Naive thymus-derived CD4-positive, alpha-beta T cell (primary cell): ENCODE measurements at regions of chr11 and their contacts with region 1.

Region 1: DNA sequence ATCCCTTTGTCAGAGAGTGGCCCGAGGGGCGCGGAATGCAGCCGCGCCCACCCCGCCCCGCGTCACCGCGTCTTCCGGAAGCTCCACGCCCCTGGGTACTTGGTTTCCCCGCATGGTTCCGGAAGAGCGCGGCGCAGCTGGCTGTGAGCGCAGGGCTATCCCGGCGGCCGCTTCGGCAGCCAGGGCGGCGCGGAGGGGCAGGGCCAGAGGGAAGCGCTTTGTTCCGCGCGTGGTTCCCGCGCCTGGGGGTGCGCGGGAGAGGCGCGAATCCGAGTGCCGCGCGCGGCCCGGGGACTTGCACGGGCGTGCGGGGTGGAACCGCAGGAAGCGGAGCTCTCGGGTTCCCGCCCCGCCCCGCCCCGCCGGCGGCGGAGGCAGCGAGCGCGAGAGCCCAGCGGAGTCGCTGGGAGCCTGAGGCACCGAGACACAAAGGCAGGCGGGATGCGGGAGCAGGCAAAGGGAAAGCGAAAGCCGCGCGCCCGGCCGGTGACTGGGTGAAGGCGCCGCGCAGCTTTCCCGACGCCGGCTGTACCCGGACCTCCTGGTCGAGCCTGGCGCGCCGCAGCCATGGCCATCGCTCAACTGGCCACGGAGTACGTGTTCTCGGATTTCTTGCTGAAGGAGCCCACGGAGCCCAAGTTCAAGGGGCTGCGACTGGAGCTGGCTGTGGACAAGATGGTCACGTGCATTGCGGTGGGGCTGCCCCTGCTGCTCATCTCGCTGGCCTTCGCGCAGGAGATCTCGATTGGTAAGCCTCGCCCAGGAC is at the start of gene PANX1:
- DNase-seq: peak; percentile 48 to 80 (median 74)
- ATAC-seq: peak; percentile 87
- H3K4me3 ChIP-seq: peak within 1 kb of the TSS; percentile 97
- H3K4me3 Mint-ChIP-seq: peak within 1 kb of the TSS in 2 of 10 donors; percentile 85 to 92
- H3K27ac ChIP-seq: peak within 1 kb of the TSS; percentile 73
- H3K27ac Mint-ChIP-seq: peak within 1 kb of the TSS; percentile 77 to 96 (median 89)
- H3K4me1 ChIP-seq: peaks cover 21 to 29% of the 10 kb centered on the region in 2 donors
- H3K4me1 Mint-ChIP-seq: peaks cover 18 to 32% (median 27%) of the 10 kb centered on the region in 7 donors
- H3K27me3 ChIP-seq: no peaks in the 10 kb centered on the region
- H3K27me3 Mint-ChIP-seq: no peaks in the 10 kb centered on the region
- total RNA-seq, gene PANX1: 5.6 to 14.8 (median 6.1) TPM

Region 2: DNA sequence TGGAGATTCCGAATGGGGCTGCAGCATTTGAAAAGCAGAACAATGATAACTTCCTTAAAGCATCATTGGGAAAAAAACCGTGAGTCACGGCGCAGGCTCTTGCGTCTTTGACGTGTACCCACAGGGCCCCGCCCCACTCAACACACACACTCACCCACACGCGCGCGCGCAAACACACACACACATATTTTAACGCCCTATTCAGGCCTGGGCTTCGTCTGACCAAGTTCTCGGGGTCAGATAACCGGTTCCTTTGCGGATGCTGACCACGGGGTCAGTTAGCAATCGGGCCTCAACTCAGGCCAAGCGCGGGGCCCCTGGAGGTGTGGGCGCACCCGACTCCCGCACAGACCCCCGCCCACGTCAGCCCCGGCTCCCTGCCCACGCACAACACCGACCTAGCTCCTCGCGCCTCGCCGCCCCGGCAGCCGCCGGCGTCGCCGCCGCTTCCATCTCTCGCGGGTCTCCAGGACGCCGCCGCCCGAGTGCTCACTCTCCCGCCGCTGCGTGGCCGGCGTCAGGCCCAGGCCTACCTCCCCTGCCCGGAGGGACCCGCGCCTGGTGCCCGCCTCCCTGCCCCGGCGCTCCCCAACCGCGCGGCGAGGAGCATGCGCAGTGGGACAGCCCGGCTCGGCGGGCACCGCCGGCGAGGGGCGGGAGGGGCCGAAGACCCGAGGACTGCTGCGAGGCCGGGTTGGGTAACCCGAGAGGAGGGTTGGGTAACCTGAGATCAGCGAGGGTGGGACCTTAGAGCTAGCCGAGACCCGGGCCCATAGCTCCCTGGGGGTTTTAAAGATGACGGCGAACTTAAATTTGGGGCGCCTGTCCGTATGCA is 931.3 kb before region 1 on chr11 and contains the start of gene SLC36A4:
- CTCF ChIA-PET with region 1: no interaction called
- POLR2A ChIA-PET with region 1: no interaction called
- intact Hi-C with region 1: loop called (anchors 1 kb)
- DNase-seq: peak; percentile 78 to 90 (median 88)
- ATAC-seq: peak; percentile 94
- H3K4me3 ChIP-seq: peak within 1 kb of the TSS; percentile 54
- H3K4me3 Mint-ChIP-seq: peak within 1 kb of the TSS; percentile 88 to 98 (median 95)
- H3K27ac ChIP-seq: peak within 1 kb of the TSS; percentile 96
- H3K27ac Mint-ChIP-seq: peak within 1 kb of the TSS; percentile 87 to 99 (median 97)
- H3K4me1 ChIP-seq: peaks cover 0 to 4% of the 10 kb centered on the region in 2 donors
- H3K4me1 Mint-ChIP-seq: peaks cover 15 to 40% (median 30%) of the 10 kb centered on the region in 7 donors
- H3K27me3 ChIP-seq: no peaks in the 10 kb centered on the region
- H3K27me3 Mint-ChIP-seq: peaks cover 0 to 24% (median 5%) of the 10 kb centered on the region in 5 donors
- total RNA-seq, gene SLC36A4: 12.0 to 22.0 (median 20.0) TPM

Region 3: DNA sequence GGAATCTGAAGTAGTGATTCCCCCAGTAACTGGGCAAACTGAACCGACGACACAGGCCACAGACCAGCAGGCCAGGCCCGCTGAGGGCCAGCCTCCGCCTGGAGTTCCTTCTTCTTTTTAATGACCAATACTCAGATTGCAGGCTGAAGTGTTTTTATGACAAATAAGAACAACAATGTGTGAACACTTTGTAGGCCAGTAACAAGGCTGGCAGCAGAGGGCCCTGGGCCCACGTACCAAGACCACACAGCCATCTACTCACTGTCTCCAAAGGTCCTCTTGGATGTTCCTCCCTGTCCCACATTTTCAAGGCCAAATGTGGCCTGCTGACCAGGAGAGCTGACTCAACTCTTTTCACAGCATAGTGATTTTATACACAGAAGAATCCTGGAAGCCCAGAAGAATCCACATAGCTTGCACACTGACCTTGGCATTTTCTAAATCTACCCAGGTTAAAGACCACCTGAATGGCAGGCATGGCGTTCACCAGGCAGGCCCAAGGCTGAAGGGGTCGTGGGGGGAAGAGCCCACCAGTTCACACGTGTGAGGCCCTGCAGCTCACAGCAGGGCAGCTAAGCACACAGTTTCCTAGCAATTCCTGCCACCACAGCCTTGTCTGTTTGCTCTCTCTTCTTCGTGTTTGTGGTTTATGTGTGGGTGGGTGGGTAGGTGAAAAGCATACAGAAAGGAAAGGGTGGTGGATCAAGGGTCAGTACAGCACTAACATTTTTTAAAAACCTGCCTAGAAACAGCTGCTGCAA is 599.0 kb before region 1 on chr11:
- CTCF ChIA-PET with region 1: no interaction called
- POLR2A ChIA-PET with region 1: no interaction called
- intact Hi-C with region 1: loop called in 1 of 2 experiments (anchors 10 kb)
- DNase-seq: no peak
- ATAC-seq: peak; percentile 52
- H3K4me3 ChIP-seq: no peak overlapping the region
- H3K4me3 Mint-ChIP-seq: peak overlapping the region in 2 of 10 donors; percentile 22 to 66
- H3K27ac ChIP-seq: no peak overlapping the region
- H3K27ac Mint-ChIP-seq: peak overlapping the region in 4 of 9 donors; percentile 38 to 77 (median 74)
- H3K4me1 ChIP-seq: no peaks in the 10 kb centered on the region
- H3K4me1 Mint-ChIP-seq: peaks cover 7 to 78% (median 26%) of the 10 kb centered on the region in 7 donors
- H3K27me3 ChIP-seq: no peaks in the 10 kb centered on the region
- H3K27me3 Mint-ChIP-seq: no peaks in the 10 kb centered on the region

Region 4: GRCh38 chr11:93662177-93662575 is 466.8 kb before region 1 on chr11:
- CTCF ChIA-PET with region 1: no interaction called
- POLR2A ChIA-PET with region 1: no interaction called
- intact Hi-C with region 1: loop called in 1 of 2 experiments (anchors 5 kb)
- DNase-seq: no peak
- ATAC-seq: no peak
- H3K4me3 ChIP-seq: peak overlapping the region; percentile 98
- H3K4me3 Mint-ChIP-seq: peak overlapping the region; percentile 76 to 96 (median 88)
- H3K27ac ChIP-seq: peak overlapping the region; percentile 88
- H3K27ac Mint-ChIP-seq: peak overlapping the region; percentile 60 to 95 (median 90)
- H3K4me1 ChIP-seq: peaks cover 8 to 11% of the 10 kb centered on the region in 2 donors
- H3K4me1 Mint-ChIP-seq: peaks cover 0 to 52% (median 37%) of the 10 kb centered on the region in 7 donors
- H3K27me3 ChIP-seq: no peaks in the 10 kb centered on the region
- H3K27me3 Mint-ChIP-seq: peaks cover 0 to 2% (median 0%) of the 10 kb centered on the region in 5 donors

Region 5: GRCh38 chr11:94028436-94028835 is 100.5 kb before region 1 on chr11:
- CTCF ChIA-PET with region 1: no interaction called
- POLR2A ChIA-PET with region 1: no interaction called
- intact Hi-C with region 1: no loop called
- DNase-seq: no peak
- ATAC-seq: no peak
- H3K4me3 ChIP-seq: no peak overlapping the region
- H3K4me3 Mint-ChIP-seq: no peak overlapping the region
- H3K27ac ChIP-seq: no peak overlapping the region
- H3K27ac Mint-ChIP-seq: no peak overlapping the region
- H3K4me1 ChIP-seq: no peaks in the 10 kb centered on the region
- H3K4me1 Mint-ChIP-seq: no peaks in the 10 kb centered on the region
- H3K27me3 ChIP-seq: no peaks in the 10 kb centered on the region
- H3K27me3 Mint-ChIP-seq: peaks cover 0 to 42% (median 16%) of the 10 kb centered on the region in 5 donors

Region 6: DNA sequence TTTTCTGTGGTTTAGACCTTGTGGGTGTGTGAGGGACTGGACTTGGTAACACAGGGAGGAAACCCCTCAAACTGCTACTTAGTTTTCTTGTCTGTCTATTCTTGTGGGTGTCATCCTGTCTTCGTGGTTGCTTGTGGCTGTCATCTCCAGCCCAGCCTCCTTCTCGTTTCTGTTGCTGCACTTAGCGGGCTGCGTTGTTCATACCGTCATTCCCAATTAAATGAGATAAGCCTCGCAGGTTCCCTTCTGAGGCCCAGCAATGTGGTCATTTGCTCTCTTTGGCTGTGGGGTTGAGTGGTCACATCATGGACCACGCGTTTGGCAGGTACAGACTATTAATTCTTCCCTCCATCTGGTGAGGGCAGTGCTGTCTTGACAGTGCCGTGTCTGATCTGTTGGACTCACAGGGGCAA is 18.5 kb after region 1 on chr11:
- CTCF ChIA-PET with region 1: no interaction called
- POLR2A ChIA-PET with region 1: no interaction called
- intact Hi-C with region 1: loop called (anchors 2 kb)
- DNase-seq: peak in 2 of 9 donors; percentile 18 to 30
- ATAC-seq: peak; percentile 37
- H3K4me3 ChIP-seq: no peak overlapping the region
- H3K4me3 Mint-ChIP-seq: peak overlapping the region; percentile 1 to 58 (median 30)
- H3K27ac ChIP-seq: no peak overlapping the region
- H3K27ac Mint-ChIP-seq: peak overlapping the region in 4 of 9 donors; percentile 7 to 75 (median 22)
- H3K4me1 ChIP-seq: peaks cover 0 to 8% of the 10 kb centered on the region in 2 donors
- H3K4me1 Mint-ChIP-seq: peaks cover 53 to 88% (median 81%) of the 10 kb centered on the region in 7 donors
- H3K27me3 ChIP-seq: no peaks in the 10 kb centered on the region
- H3K27me3 Mint-ChIP-seq: no peaks in the 10 kb centered on the region

Region 7: GRCh38 chr11:94224078-94224477 is 95.1 kb after region 1 on chr11:
- CTCF ChIA-PET with region 1: no interaction called
- POLR2A ChIA-PET with region 1: no interaction called
- intact Hi-C with region 1: no loop called
- DNase-seq: no peak
- ATAC-seq: no peak
- H3K4me3 ChIP-seq: no peak overlapping the region
- H3K4me3 Mint-ChIP-seq: no peak overlapping the region
- H3K27ac ChIP-seq: no peak overlapping the region
- H3K27ac Mint-ChIP-seq: no peak overlapping the region
- H3K4me1 ChIP-seq: no peaks in the 10 kb centered on the region
- H3K4me1 Mint-ChIP-seq: no peaks in the 10 kb centered on the region
- H3K27me3 ChIP-seq: no peaks in the 10 kb centered on the region
- H3K27me3 Mint-ChIP-seq: peaks cover 0 to 8% (median 0%) of the 10 kb centered on the region in 5 donors

Region 8: DNA sequence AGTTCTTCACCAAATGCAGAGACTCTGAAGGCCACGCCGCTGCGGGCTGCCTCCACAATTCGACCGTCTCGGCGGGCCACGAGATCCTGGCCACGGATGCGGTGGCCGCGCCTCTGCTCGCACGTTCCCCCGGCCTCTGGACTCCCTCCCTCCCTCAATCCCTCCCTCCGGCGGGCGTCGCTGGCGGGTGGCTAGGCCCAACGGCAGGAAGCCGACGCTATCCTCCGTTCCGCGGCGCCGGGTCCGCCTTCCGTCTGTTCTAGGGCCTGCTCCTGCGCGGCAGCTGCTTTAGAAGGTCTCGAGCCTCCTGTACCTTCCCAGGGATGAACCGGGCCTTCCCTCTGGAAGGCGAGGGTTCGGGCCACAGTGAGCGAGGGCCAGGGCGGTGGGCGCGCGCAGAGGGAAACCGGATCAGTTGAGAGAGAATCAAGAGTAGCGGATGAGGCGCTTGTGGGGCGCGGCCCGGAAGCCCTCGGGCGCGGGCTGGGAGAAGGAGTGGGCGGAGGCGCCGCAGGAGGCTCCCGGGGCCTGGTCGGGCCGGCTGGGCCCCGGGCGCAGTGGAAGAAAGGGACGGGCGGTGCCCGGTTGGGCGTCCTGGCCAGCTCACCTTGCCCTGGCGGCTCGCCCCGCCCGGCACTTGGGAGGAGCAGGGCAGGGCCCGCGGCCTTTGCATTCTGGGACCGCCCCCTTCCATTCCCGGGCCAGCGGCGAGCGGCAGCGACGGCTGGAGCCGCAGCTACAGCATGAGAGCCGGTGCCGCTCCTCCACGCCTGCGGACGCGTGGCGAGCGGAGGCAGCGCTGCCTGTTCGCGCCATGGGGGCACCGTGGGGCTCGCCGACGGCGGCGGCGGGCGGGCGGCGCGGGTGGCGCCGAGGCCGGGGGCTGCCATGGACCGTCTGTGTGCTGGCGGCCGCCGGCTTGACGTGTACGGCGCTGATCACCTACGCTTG is 415.0 kb after region 1 on chr11 and contains the start of gene FUT4:
- CTCF ChIA-PET with region 1: no interaction called
- POLR2A ChIA-PET with region 1: no interaction called
- intact Hi-C with region 1: loop called in 1 of 2 experiments (anchors 1 kb)
- DNase-seq: peak; percentile 51 to 83 (median 70)
- ATAC-seq: peak; percentile 84
- H3K4me3 ChIP-seq: peak within 1 kb of the TSS; percentile 85
- H3K4me3 Mint-ChIP-seq: peak within 1 kb of the TSS; percentile 93 to 100 (median 98)
- H3K27ac ChIP-seq: peak within 1 kb of the TSS; percentile 88
- H3K27ac Mint-ChIP-seq: peak within 1 kb of the TSS; percentile 96 to 100 (median 99)
- H3K4me1 ChIP-seq: peaks cover 22 to 29% of the 10 kb centered on the region in 2 donors
- H3K4me1 Mint-ChIP-seq: peaks cover 24 to 49% (median 41%) of the 10 kb centered on the region in 7 donors
- H3K27me3 ChIP-seq: no peaks in the 10 kb centered on the region
- H3K27me3 Mint-ChIP-seq: no peaks in the 10 kb centered on the region
- total RNA-seq, gene FUT4: 5.6 to 10.2 (median 6.9) TPM